ENCODE measurements at regions of chr9 and their contacts with region 1.

Region 1: GRCh38 chr9:5510360-5510931 is at the start of gene PDCD1LG2:
- H3K4me3 Mint-ChIP-seq: peak within 1 kb of the TSS; percentile 92
- H3K27ac Mint-ChIP-seq: peak within 1 kb of the TSS; percentile 94
- H3K4me1 Mint-ChIP-seq: peaks cover 83% of the 10 kb centered on the region
- H3K27me3 Mint-ChIP-seq: no peaks in the 10 kb centered on the region

Region 2: DNA sequence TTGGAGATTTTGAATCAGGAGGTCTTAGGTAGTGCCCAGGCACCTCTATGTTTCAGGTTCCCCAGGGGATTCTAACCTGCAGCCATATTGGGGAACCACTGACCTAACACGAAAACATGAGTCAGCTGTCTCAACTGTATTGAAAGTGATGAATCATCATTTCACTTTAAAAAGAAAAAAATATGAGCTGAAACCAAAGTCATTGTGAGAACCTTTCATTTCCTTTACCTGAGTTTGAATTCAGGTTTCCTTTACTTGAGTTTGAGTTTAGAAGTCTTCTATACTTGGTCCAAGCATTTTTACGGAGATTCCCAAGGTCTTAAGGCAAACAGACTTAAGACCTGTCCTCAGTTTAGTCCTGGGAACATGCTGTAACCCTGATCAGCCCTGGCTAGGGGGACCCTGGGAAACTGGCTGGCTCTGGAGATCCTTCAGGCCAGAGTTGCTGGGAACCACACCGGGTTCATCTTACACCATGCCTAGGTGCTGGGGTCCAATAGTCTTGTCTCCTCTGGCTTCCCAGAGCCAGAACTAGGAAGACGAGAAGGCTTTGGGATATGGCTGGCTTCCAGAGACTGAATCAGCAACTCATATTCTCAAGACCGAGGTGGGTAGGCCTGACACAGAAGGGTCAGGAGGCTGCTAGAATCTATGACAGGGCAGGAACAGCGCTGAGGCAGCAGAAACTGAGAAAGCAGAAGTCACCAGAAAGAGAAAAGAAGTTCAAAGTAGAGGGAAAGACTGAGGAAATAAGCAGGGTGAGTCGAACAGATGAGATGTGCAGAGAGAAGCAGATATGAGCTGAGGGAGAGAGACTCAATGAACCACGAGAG is 16.6 kb before region 1 on chr9:
- intact Hi-C with region 1: loop called (anchors 2 kb)
- H3K4me3 Mint-ChIP-seq: peak overlapping the region; percentile 30
- H3K27ac Mint-ChIP-seq: peak overlapping the region; percentile 81
- H3K4me1 Mint-ChIP-seq: peaks cover 66% of the 10 kb centered on the region
- H3K27me3 Mint-ChIP-seq: peaks cover 1% of the 10 kb centered on the region

Region 3: GRCh38 chr9:5529683-5530221 is 19.3 kb after region 1 on chr9:
- intact Hi-C with region 1: loop called (anchors 2 kb)
- H3K4me3 Mint-ChIP-seq: peak overlapping the region; percentile 17
- H3K27ac Mint-ChIP-seq: peak overlapping the region; percentile 87
- H3K4me1 Mint-ChIP-seq: peaks cover 54% of the 10 kb centered on the region
- H3K27me3 Mint-ChIP-seq: no peaks in the 10 kb centered on the region

Region 4: DNA sequence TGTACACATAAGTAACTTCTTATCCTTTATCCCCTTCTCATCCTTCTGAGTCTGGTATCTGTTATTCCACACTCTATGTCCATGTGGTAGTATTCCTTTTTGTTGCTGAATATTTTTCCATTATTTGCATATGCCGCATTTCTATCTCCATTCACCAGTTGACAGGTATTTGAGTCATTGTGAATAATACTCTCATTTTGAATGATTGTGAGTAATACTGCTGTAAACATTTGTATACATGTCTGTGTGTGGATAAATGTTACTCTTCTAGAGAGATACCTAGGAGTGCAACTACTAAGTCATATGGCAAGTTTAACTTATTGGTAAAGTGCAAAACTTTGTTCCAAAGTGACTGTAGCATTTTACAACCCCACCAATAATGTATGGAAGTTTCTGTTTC is 134.1 kb after region 1 on chr9:
- intact Hi-C with region 1: no loop called
- H3K4me3 Mint-ChIP-seq: no peak overlapping the region
- H3K27ac Mint-ChIP-seq: no peak overlapping the region
- H3K4me1 Mint-ChIP-seq: peaks cover 60% of the 10 kb centered on the region
- H3K27me3 Mint-ChIP-seq: no peaks in the 10 kb centered on the region

Measured in dendritic cell treated with granulocyte-macrophage colony-stimulating factor and Interleukin-4, amounts not matched to agents 40 ng/mL and 50 ng/mL, for 4 days (primary cell).